PC-9 (cell line): ENCODE measurements at regions of chr2 and their contacts with region 1.

Region 1: GRCh38 chr2:200811336-200812121 is at the start of gene BZW1:
- DNase-seq: peak; percentile 85 to 94
- H3K4me3 ChIP-seq: peak within 1 kb of the TSS; percentile 100
- H3K27ac ChIP-seq: peak within 1 kb of the TSS; percentile 93
- H3K4me1 ChIP-seq: peaks cover 42% of the 10 kb centered on the region
- H3K27me3 ChIP-seq: no peaks in the 10 kb centered on the region
- CTCF ChIP-seq: no peak
- total RNA-seq, gene BZW1: 274 and 300 TPM in 2 replicates

Region 2: DNA sequence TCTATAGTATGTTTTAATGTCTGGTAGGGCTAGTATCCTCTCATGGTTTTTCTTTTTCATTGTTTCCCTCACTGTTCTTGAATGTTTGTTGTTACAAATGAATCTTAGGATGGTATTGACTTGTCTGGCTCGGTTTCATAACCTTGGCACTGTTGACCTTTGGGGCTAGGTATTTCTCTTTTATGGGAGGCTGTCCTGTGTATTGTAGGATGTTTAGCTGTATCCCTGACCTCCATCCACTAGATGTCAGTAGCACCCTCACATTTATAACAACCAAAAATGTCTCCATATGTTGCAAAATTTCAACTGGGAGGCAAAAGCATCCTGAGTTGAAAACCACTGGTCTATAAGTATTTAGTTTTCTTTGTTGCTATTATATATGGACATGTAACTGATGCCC is 232.8 kb before region 1 on chr2:
- CTCF ChIA-PET with region 1: no interaction called
- POLR2A ChIA-PET with region 1: no interaction called
- intact Hi-C with region 1: loop called (anchors 5 kb)
- DNase-seq: peak in 1 of 2 experiments; percentile 6
- H3K4me3 ChIP-seq: no peak overlapping the region
- H3K27ac ChIP-seq: no peak overlapping the region
- H3K4me1 ChIP-seq: no peaks in the 10 kb centered on the region
- H3K27me3 ChIP-seq: no peaks in the 10 kb centered on the region
- CTCF ChIP-seq: peak; percentile 76

Region 3: GRCh38 chr2:200747668-200748618 is 63.6 kb before region 1 on chr2:
- CTCF ChIA-PET with region 1: interaction called, 6 read pairs
- POLR2A ChIA-PET with region 1: interaction called, 12 read pairs
- intact Hi-C with region 1: no loop called
- DNase-seq: peak in 1 of 2 experiments; percentile 17
- H3K4me3 ChIP-seq: no peak overlapping the region
- H3K27ac ChIP-seq: no peak overlapping the region
- H3K4me1 ChIP-seq: peaks cover 11% of the 10 kb centered on the region
- H3K27me3 ChIP-seq: no peaks in the 10 kb centered on the region
- CTCF ChIP-seq: no peak

Region 4: DNA sequence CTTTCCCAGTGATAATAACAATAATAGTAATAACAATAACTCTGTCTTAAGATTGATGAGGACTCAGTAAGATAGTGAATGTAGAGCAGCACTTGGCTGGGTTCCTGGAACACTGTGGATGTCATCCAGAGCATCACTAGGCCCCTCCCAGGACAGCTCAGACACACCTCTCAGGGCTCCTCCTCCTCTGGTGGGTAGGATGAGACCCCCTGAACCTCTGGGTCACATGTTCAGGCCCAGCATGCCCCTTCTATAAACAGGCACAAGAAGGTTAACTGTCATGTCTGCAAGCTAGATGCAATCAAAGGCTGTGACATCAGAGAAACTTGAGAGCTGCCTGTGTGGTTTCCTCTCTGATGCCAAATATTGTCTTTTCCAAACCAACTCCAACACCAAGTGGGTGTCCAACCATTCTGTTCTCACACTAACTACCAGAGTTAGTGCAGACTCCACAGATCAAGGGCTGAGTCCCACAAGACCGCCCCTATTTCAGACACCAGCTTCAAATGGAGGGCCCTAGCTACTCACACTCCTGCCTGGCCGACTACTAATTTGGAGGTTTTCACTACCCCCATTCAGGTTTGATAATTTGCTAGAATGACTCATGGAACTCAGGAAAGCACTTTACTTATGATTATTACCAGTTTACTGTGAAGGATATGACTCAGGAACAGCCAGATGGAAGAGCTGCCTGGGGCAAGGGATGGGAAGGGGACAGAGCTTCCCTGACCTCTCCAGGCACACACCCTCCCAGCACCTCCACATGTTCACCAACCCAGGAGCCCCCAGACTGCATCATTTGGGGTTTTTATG is 46.2 kb before region 1 on chr2:
- CTCF ChIA-PET with region 1: interaction called, 3 read pairs
- POLR2A ChIA-PET with region 1: interaction called, 4 read pairs
- intact Hi-C with region 1: loop called (anchors 2 kb)
- DNase-seq: peak; percentile 55 to 94
- H3K4me3 ChIP-seq: peak overlapping the region; percentile 16; the same call in 1 of the 2 replicates
- H3K27ac ChIP-seq: peak overlapping the region; percentile 94
- H3K4me1 ChIP-seq: peaks cover 67% of the 10 kb centered on the region
- H3K27me3 ChIP-seq: no peaks in the 10 kb centered on the region
- CTCF ChIP-seq: no peak

Region 5: GRCh38 chr2:200864176-200864976 is 52.8 kb after region 1 on chr2 and contains the start of gene CLK1:
- CTCF ChIA-PET with region 1: no interaction called
- POLR2A ChIA-PET with region 1: no interaction called
- intact Hi-C with region 1: loop called (anchors 1 kb)
- DNase-seq: peak; percentile 79 to 83
- H3K4me3 ChIP-seq: peak within 1 kb of the TSS; percentile 87
- H3K27ac ChIP-seq: peak within 1 kb of the TSS; percentile 84
- H3K4me1 ChIP-seq: peaks cover 17% of the 10 kb centered on the region
- H3K27me3 ChIP-seq: no peaks in the 10 kb centered on the region
- CTCF ChIP-seq: no peak
- total RNA-seq, gene CLK1: 38.5 and 57.0 TPM in 2 replicates

Region 6: DNA sequence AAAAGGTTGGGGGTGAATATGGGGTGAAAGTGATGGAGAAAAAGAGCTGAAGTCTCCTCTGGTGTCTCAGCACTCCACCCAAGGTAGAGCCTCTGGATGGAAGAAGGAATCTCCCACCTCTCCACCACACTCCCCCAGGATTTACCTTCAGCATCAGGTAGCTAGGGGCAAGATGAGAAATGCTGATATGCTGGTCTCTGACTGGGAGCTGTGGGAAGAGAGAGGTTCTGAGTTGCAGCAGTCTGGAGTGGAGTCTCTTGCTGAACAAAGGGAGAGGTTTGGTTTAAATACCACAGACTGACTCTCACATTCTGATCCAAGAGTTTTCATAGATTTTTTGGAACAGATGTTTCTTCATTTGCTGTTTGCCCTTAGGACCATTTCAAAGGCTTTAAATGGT is 303.3 kb after region 1 on chr2:
- CTCF ChIA-PET with region 1: no interaction called
- POLR2A ChIA-PET with region 1: no interaction called
- intact Hi-C with region 1: no loop called
- DNase-seq: no peak
- H3K4me3 ChIP-seq: peak overlapping the region; percentile 68; the same call in 1 of the 2 replicates
- H3K27ac ChIP-seq: peak overlapping the region; percentile 100; the same call in 1 of the 2 replicates
- H3K4me1 ChIP-seq: peaks cover 30% of the 10 kb centered on the region
- H3K27me3 ChIP-seq: no peaks in the 10 kb centered on the region
- CTCF ChIP-seq: no peak